ENCODE measurements at regions of chr18 and their contacts with region 1.

Region 1: DNA sequence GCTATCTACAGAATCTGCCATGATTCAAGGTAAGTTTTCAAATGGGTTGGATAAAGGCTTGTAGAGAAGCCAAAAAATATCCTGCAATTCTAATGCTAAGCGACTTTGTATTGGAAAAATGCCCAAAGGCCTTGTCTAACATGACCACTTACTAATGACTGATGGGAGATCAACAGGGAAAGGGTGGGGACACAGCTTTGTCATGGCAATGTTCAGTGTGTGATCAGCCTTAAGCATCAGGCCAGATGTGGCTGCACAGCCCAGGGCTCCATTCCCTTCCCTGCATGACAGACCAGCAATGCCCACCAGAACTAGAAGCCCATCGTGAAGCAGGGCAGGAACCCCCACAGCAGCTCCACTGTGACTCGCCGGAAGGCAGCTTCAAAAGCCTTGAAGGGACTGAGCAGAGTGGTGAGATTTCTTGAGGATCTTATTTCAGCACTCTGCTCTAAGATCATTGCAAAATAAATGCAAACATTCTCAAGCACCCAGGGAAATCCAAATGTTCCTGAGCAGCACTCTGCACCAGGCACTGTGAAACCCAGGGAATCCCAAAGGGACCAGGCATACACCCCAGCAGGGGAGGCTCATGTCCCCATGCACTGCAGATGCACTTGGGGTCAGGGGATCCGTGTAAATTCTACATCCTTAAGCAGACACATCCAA is 517.9 kb upstream of the SMIM21 start:
- DNase-seq: no peak
- H3K4me3 ChIP-seq: no peak overlapping the region
- H3K27ac ChIP-seq: no peak overlapping the region
- H3K4me1 ChIP-seq: no peaks in the 10 kb centered on the region
- H3K27me3 ChIP-seq: no peaks in the 10 kb centered on the region
- CTCF ChIP-seq: no peak

Region 2: DNA sequence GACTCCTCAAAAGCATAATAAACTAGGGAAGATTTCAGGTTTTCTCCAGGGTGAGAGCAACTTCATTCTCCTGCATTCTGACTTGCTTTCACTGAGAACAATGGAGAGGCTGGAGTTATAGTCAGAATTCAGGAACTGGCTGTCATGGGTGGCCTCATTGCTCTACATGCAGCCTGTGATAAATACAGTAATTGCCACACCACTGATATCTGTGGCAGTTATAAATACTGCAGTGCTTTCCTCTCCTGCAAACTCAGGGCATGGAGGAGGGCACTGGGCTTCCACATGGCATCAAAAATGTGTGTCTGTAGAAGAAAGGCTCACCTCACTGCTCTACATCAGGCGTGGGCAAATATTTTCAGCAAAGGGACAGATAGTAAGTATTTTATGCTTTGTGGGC is 39.5 kb after region 1 on chr18:
- CTCF ChIA-PET with region 1: no interaction called
- POLR2A ChIA-PET with region 1: no interaction called
- intact Hi-C with region 1: no loop called
- DNase-seq: no peak
- H3K4me3 ChIP-seq: no peak overlapping the region
- H3K27ac ChIP-seq: no peak overlapping the region
- H3K4me1 ChIP-seq: no peaks in the 10 kb centered on the region
- H3K27me3 ChIP-seq: no peaks in the 10 kb centered on the region
- CTCF ChIP-seq: no peak

Region 3: DNA sequence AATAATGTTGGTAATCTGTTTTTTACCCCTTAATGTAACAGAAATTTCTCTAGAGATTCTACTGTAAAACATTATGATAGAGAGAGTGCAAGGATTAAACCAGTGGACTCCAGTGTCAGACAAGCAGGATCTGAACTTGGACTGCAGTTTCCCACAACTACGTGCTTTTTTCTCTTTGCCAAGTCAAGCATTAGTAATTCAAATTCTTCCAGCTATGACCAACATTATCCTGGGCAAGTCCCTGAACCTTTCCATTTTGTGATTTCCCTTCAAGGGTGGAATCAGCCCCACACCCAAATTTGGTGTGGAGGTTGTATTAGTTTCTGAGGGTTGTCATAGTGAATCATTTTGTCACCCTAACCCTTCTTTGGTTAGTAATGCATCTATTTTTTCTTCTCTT is 67.7 kb after region 1 on chr18:
- CTCF ChIA-PET with region 1: no interaction called
- POLR2A ChIA-PET with region 1: no interaction called
- intact Hi-C with region 1: loop called (anchors 2 kb)
- DNase-seq: no peak
- H3K4me3 ChIP-seq: no peak overlapping the region
- H3K27ac ChIP-seq: no peak overlapping the region
- H3K4me1 ChIP-seq: no peaks in the 10 kb centered on the region
- H3K27me3 ChIP-seq: no peaks in the 10 kb centered on the region
- CTCF ChIP-seq: no peak

Region 4: GRCh38 chr18:76075777-76076176 is 130.4 kb after region 1 on chr18:
- CTCF ChIA-PET with region 1: no interaction called
- POLR2A ChIA-PET with region 1: no interaction called
- intact Hi-C with region 1: no loop called
- DNase-seq: no peak
- H3K4me3 ChIP-seq: no peak overlapping the region
- H3K27ac ChIP-seq: no peak overlapping the region
- H3K4me1 ChIP-seq: no peaks in the 10 kb centered on the region
- H3K27me3 ChIP-seq: no peaks in the 10 kb centered on the region
- CTCF ChIP-seq: no peak

Region 5: GRCh38 chr18:76102156-76102555 is 156.8 kb after region 1 on chr18:
- CTCF ChIA-PET with region 1: no interaction called
- POLR2A ChIA-PET with region 1: no interaction called
- intact Hi-C with region 1: no loop called
- DNase-seq: no peak
- H3K4me3 ChIP-seq: no peak overlapping the region
- H3K27ac ChIP-seq: no peak overlapping the region
- H3K4me1 ChIP-seq: no peaks in the 10 kb centered on the region
- H3K27me3 ChIP-seq: no peaks in the 10 kb centered on the region
- CTCF ChIP-seq: no peak

Measured in A673 (cell line).